Posterior cingulate gyrus (tissue), 11 donors: ENCODE measurements at regions of chr14 and their contacts with region 1.

Region 1: GRCh38 chr14:78836777-78837176 is 666.6 kb downstream of the NRXN3 start:
- DNase-seq: peak in 7 of 10 donors; percentile 11 to 82 (median 54)

Region 2: GRCh38 chr14:78598041-78598920 is 238.5 kb before region 1 on chr14:
- intact Hi-C with region 1: loop called (anchors 10 kb)
- DNase-seq: peak; percentile 32 to 95 (median 62)

Region 3: DNA sequence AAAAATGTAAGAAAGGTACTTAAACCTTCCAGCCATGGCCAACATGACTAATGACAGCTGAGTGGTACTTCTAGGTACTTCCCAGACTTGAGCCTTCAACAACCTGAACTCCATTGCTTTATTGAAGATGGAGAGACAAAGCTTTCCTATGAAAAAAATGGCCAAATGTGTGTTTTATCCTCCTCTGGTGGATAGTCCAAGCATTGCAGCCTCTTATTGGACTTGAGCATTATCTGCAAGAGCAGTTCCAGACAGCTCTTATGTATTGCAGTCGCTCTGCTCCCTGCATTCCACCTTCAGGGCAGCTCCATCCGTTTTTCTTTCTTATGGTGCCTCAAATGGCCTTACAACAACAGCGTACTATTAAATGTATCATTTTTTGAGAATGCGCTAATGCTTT is 78.4 kb before region 1 on chr14:
- intact Hi-C with region 1: no loop called
- DNase-seq: peak in 1 of 10 donors; percentile 17